IMR-90 (cell line): ENCODE measurements at regions of chr14 and their contacts with region 1.

Region 1: DNA sequence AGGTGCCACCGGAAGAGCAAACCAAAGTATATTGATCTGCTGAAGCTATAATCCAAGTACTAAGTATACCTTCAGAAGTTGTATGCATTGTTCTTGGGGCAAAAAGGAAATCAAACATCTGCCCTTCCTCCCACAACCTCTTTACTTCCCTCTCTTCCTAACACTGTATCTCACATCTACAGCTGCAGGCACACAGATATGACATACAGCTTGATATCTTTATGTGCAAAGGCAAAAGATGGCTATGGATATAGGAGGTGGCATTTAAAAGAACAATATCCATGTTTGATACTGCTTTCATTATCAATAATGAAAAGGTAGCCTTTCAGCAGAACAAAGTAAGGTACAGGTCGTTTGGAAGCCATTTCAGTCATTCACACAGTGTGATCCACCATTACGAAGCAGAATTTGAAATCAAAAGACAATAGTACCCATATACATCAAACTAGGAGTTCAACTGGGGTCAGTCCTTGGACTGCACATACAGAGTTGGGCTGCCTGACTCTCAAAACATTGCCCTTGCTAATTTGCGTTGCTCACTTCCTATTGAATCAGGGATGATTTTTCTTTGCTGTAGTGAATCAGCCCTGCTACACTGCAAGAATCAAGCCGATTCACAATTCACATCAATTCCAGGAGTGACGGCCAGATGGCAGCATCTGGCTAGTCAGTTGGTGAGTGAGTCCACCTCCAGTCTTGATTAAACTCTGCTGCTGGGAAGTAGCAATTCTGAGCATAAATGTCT is 8.9 kb downstream of the ANG start:
- DNase-seq: peak; percentile 75
- ATAC-seq: peak; percentile 91
- H3K4me3 ChIP-seq: no peak overlapping the region
- H3K27ac ChIP-seq: no peak overlapping the region
- H3K4me1 ChIP-seq: no peaks in the 10 kb centered on the region
- H3K27me3 ChIP-seq: no peaks in the 10 kb centered on the region
- CTCF ChIP-seq: peak; percentile 74
- POLR2A ChIP-seq: no peak
- RAD21 ChIP-seq: peak; percentile 74

Region 2: DNA sequence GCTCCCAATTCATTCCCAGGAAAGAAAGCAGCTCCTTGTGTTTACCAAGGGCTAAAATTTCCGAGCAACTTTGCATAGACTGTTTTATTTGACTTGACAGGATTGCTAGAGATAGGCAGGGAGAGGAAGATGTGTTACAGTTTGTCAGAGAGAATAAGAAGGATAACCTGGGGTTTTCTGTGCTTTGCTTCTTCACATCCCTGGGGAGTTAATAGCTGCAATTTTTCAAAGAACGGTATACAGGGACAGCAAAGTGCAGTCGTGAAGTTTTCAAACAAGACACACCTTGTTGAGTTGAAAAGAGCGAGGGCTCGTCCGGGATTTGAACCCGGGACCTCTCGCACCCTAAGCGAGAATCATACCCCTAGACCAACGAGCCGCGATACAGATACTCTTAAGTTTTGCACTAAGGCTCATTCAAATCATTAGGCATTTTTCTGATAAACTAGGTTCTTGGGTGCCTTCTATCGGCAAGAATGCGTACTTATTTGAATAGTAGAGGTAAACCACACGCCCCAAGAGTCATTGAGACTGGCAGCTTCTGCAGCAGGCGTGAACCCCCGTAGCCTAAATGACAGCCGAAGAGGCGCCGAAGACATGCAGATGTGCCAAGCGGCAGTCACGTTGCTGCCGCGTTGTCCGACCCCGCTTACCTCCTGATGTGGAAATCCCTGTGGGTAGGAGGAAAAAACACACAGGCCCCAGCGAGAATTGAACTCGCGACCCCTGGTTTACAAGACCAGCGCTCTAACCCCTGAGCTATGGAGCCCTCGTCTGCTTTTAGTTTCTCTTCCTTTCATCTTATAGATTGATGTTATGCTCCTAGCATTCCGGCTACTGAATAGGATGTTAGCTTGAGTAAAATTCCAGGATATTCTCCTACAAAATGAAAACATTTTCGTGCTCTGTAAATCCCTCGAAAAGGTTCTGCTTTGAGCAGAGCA is 84.1 kb before region 1 on chr14:
- CTCF ChIA-PET with region 1: no interaction called
- POLR2A ChIA-PET with region 1: no interaction called
- dilution Hi-C with region 1: no loop called
- in situ Hi-C with region 1: no loop called
- intact Hi-C with region 1: no loop called
- DNase-seq: peak; percentile 99
- ATAC-seq: peak; percentile 84
- H3K4me3 ChIP-seq: peak overlapping the region; percentile 80
- H3K27ac ChIP-seq: no peak overlapping the region
- H3K4me1 ChIP-seq: no peaks in the 10 kb centered on the region
- H3K27me3 ChIP-seq: no peaks in the 10 kb centered on the region
- CTCF ChIP-seq: peak; percentile 84
- POLR2A ChIP-seq: no peak
- RAD21 ChIP-seq: 0 out of 2 replicates have a peak, but pooled peaks have one; percentile 15

Region 3: DNA sequence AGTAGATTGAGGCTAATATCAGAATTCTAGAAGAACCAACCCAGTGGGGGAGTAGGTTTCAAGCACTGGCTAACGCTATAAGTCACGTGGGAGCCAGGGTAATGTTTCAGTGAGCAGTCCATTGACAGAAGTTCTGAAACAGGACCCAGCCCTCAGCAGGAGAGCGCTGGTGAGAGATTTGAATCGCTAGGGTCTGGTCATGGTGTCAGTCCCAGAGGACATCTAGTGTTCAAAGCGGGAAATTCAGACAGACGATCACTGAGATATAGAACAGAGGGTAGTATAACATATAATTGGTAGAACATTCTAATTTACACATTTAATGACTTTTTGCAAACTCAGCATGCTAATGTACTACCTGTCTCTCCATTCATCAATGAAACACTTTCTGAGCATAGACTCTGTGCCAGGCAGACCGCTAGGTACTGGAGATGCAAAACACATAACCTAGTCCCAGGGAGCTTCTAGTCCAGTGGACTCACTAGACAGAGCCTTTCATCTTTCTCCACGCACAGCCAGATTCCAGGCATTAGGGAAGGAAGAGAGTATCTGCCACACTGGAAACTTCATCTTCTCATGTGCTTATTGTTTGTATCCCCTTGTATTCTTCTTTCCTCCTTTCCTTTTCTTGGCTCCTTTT is 158.3 kb after region 1 on chr14:
- CTCF ChIA-PET with region 1: interaction called, 5 read pairs
- POLR2A ChIA-PET with region 1: no interaction called
- dilution Hi-C with region 1: no loop called
- in situ Hi-C with region 1: no loop called
- intact Hi-C with region 1: loop called (anchors 1 kb)
- DNase-seq: peak; percentile 59
- ATAC-seq: peak; percentile 89
- H3K4me3 ChIP-seq: no peak overlapping the region
- H3K27ac ChIP-seq: no peak overlapping the region
- H3K4me1 ChIP-seq: no peaks in the 10 kb centered on the region
- H3K27me3 ChIP-seq: peaks cover 2% of the 10 kb centered on the region; the same call in 1 of the 2 replicates
- CTCF ChIP-seq: peak; percentile 61
- POLR2A ChIP-seq: no peak
- RAD21 ChIP-seq: peak; percentile 63

Region 4: GRCh38 chr14:20873370-20874177 is 176.1 kb after region 1 on chr14:
- CTCF ChIA-PET with region 1: interaction called, 3 read pairs
- POLR2A ChIA-PET with region 1: no interaction called
- dilution Hi-C with region 1: no loop called
- in situ Hi-C with region 1: no loop called
- intact Hi-C with region 1: loop called (anchors 1 kb)
- DNase-seq: peak; percentile 56
- ATAC-seq: peak; percentile 82
- H3K4me3 ChIP-seq: no peak overlapping the region
- H3K27ac ChIP-seq: no peak overlapping the region
- H3K4me1 ChIP-seq: no peaks in the 10 kb centered on the region
- H3K27me3 ChIP-seq: no peaks in the 10 kb centered on the region; the same call in none of the 2 replicates
- CTCF ChIP-seq: peak; percentile 66
- POLR2A ChIP-seq: no peak
- RAD21 ChIP-seq: peak; percentile 58

Region 5: DNA sequence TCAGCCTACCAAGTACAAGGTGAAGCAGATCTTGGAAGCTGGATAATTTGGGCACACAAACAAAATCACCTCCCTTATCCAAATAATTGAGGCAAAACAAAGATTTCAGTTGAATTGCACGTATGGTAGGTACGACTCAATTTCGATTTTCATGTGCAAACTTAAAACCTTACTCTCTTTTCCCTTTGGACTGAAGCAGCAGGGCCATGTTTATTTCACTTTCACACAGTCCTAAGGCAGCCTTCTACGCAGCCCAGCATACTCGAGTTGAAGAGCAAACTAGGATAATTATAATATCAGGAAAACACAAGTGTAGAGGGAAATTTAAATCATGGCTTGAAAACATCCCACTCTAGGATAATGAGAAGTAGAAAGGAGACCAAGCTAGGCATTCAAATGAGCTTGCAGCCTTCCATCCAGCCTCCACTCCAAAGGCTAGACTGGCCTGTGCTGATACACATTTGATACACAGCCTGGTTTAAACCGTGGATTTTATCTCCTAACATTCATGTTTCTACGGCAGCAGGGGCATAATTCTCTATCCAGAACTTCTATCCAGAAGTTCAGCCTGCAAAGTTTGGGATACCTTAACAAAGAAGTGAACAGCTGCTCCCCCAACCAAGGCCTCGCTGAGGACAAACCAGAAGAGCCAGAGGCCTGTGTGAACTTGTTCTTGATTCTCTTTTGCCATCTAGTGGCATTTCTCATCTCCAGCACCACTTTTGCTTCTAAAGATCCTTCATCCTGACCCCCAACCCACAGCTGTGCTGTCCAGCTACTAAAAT is 342.3 kb after region 1 on chr14:
- CTCF ChIA-PET with region 1: interaction called, 3 read pairs
- POLR2A ChIA-PET with region 1: no interaction called
- dilution Hi-C with region 1: no loop called
- in situ Hi-C with region 1: no loop called
- intact Hi-C with region 1: loop called (anchors 1 kb)
- DNase-seq: peak; percentile 67
- ATAC-seq: peak; percentile 81
- H3K4me3 ChIP-seq: no peak overlapping the region
- H3K27ac ChIP-seq: no peak overlapping the region
- H3K4me1 ChIP-seq: peaks cover 2% of the 10 kb centered on the region; the same call in 1 of the 2 replicates
- H3K27me3 ChIP-seq: peaks cover 36% of the 10 kb centered on the region
- CTCF ChIP-seq: peak; percentile 68
- POLR2A ChIP-seq: no peak
- RAD21 ChIP-seq: peak; percentile 70